ENCODE measurements at regions of chr17 and their contacts with region 1.

Region 1: DNA sequence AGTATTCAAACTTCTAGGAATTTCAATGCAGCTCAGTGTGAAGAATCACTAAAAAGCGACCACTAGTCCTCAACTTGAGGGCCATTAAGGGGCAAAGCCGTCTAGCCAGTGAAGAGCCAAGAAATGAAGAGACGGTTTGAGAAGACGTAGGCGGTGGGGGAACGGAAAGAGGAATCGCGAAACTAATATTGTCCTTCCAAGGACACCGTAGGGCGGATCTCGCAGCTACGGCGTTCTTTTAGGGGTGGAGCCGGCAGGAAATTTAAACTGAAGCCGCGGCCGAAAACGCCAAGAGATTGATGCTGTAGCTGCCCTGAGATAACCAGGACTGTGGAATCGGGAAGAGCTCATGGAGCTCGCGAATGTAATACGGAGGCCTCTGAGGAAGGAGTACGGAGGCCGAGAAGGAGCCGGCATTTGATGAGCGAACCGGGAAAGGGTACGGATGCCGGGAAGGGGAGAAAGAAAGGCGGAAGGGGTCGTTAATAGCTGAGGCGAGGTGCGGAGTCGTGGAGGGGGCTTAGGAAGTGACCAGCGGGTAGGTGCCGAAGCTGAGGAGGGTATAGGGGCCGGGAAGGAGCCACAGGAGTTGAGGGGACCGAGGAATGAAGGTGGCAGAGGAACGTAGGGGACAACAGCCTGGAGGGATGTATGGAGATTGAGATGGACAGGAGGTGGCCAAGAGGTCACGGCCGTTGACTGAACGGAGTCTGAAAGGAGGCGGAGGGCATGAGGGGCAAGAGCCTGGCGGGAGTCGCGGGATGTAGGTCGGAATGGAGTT is at the start of gene DBF4B:
- DNase-seq: peak; percentile 89
- H3K4me3 Mint-ChIP-seq: no peak within 1 kb of the TSS
- H3K27ac Mint-ChIP-seq: no peak within 1 kb of the TSS
- H3K4me1 Mint-ChIP-seq: peaks cover 5% of the 10 kb centered on the region
- H3K27me3 Mint-ChIP-seq: peaks cover 4% of the 10 kb centered on the region
- total RNA-seq, gene DBF4B: 25.9 to 27.9 TPM

Region 2: DNA sequence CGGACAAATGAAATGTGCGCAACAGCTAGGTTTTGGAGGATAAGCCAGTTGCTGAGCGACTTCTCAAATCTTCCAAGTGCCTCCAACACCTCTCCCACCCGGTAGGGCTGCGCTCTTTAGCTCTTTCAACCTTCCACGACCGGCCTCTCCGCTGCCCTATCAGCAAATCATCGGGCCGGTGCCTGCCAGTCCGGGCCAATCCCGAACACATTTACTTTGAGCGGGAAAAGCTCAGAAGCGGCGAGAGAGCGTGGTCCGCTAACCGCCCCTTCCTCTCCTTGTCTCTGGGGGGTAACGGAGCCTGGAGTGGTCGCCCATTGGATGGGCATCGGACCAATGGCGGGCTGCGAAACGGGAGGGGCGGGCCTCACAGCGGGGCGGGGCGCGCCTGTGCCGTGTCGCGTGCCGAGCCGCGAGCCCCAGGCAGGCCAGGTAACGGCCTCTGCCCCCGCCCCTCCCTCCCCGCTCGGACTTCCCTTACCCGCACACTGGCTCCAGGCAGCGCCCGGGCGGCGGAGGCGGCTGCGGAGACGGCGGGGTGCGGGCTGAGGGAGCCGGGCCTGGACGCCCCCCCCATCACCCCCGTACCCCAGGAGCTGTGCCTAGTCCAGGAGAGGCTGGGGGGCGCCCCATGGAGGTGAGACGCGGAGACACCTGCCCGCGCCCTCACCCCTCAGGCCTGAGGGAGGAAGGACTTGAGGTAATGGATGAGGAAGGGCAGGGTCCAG is 52.4 kb before region 1 on chr17 and contains the start of gene MEIOC:
- CTCF ChIA-PET with region 1: no interaction called
- POLR2A ChIA-PET with region 1: no interaction called
- intact Hi-C with region 1: no loop called
- DNase-seq: peak; percentile 53
- H3K4me3 Mint-ChIP-seq: peak within 1 kb of the TSS; percentile 48
- H3K27ac Mint-ChIP-seq: no peak within 1 kb of the TSS
- H3K4me1 Mint-ChIP-seq: peaks cover 4% of the 10 kb centered on the region
- H3K27me3 Mint-ChIP-seq: peaks cover 20% of the 10 kb centered on the region
- total RNA-seq, gene MEIOC: 0.33 to 0.46 TPM

Region 3: GRCh38 chr17:44689477-44690217 is 18.9 kb before region 1 on chr17 and contains the start of gene CCDC43:
- CTCF ChIA-PET with region 1: interaction called, 10 read pairs
- POLR2A ChIA-PET with region 1: interaction called, 8 read pairs
- intact Hi-C with region 1: loop called (anchors 1 kb)
- DNase-seq: peak; percentile 95
- H3K4me3 Mint-ChIP-seq: peak within 1 kb of the TSS; percentile 99
- H3K27ac Mint-ChIP-seq: peak within 1 kb of the TSS; percentile 91
- H3K4me1 Mint-ChIP-seq: peaks cover 28% of the 10 kb centered on the region
- H3K27me3 Mint-ChIP-seq: no peaks in the 10 kb centered on the region
- total RNA-seq, gene CCDC43: 26.4 to 27.7 TPM

Measured in activated CD4-positive, alpha-beta memory T cell treated with anti-CD3 and anti-CD28 coated beads for 36 hours (primary cell).